ENCODE measurements at regions of chr1 and their contacts with region 1.

Region 1: GRCh38 chr1:31705080-31705866 is 1.5 kb upstream of the COL16A1 start:
- DNase-seq: no peak
- H3K4me3 ChIP-seq: peak overlapping the region in 1 of 2 donors; percentile 51
- H3K27ac ChIP-seq: peak overlapping the region; percentile 87
- H3K4me1 ChIP-seq: peaks cover 63% of the 10 kb centered on the region
- H3K27me3 ChIP-seq: no peaks in the 10 kb centered on the region
- CTCF ChIP-seq: peak in 2 of 3 experiments; percentile 19 to 22
- POLR2A ChIP-seq: no peak

Region 2: DNA sequence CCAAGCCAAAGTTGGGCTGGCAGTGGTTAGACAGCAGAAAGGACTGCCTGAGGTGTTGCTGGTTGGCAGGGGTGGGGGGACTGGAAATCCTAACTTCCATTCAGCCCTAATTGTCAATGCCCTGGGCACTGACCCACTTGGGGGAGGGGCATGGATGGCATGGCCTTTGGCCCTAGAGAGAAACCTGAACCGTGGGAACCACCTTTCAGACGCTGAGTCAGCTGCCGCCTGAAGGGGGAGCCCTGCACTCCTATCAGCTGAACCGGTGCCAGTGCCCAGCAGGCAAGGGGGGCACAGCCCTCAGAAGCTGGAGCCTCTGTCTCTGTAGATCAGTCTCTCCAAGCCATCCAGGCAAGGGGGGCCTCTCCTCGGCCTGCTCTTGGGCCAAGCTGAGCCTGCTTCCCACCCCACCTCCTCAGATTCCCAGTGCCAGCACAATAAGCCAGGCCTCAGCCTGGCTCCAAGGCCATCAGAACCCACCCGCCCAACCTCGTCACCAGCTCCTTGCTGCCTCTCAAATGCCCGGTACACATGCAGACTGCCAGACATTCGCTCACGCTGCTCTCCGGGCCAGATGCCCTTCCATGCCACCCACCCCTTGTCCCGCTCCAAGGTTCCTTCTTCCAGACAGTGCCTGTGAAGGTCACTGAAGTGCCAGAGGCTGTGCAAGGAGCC is 117.4 kb before region 1 on chr1:
- intact Hi-C with region 1: loop called (anchors 10 kb)
- DNase-seq: peak in 1 of 2 donors; percentile 81
- H3K4me3 ChIP-seq: peak overlapping the region in 1 of 2 donors; percentile 58
- H3K27ac ChIP-seq: peak overlapping the region; percentile 70
- H3K4me1 ChIP-seq: peaks cover 50% of the 10 kb centered on the region
- H3K27me3 ChIP-seq: no peaks in the 10 kb centered on the region
- CTCF ChIP-seq: peak in 2 of 3 experiments; percentile 17 to 34
- POLR2A ChIP-seq: no peak

Region 3: DNA sequence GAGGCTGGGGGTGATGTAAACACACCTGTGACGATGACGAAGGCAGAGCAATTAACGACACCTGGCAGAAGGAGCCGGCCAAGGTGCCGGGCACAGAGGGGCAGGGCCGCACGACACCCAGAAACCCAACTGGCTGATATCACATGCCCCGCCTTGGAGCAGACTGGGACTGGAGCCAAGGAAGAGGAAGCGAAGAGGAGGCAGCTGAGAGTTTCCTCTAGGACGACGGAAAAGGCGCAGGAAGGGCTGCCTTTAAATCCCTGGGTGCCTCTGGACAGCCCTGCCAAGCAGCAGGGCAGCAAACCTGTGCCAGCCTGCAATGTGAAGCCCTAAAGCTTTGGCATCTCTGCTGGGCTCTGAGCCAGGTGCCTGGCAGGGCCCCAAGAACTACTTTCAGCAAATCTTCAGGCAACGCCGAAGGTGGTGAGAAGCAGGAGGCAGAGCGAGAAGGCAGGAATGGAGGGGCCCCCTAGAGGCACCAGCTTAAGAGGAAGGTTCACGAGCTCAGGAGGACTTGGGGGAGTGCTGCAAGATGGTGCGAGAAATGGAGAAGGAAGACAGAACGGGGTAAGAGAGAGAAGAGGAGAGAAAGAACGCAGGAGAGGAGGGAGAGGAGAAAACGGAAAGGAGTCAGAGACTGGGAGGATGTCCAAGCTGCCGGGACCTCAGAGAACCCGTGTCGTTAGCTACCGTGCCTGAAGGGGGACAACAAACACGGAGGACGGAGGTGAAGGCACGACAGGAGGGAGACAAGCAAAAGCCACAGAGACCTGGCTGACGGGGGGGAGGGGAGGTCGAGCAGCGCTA is 35.3 kb before region 1 on chr1:
- intact Hi-C with region 1: loop called (anchors 5 kb)
- DNase-seq: no peak
- H3K4me3 ChIP-seq: peak overlapping the region; percentile 12 to 23
- H3K27ac ChIP-seq: peak overlapping the region; percentile 72
- H3K4me1 ChIP-seq: peaks cover 90% of the 10 kb centered on the region
- H3K27me3 ChIP-seq: no peaks in the 10 kb centered on the region
- CTCF ChIP-seq: no peak
- POLR2A ChIP-seq: no peak

Region 4: GRCh38 chr1:31715087-31715872 is 10.0 kb after region 1 on chr1:
- intact Hi-C with region 1: loop called (anchors 1 kb)
- DNase-seq: peak in 1 of 2 donors; percentile 96
- H3K4me3 ChIP-seq: peak overlapping the region; percentile 39 to 58
- H3K27ac ChIP-seq: peak overlapping the region; percentile 90
- H3K4me1 ChIP-seq: peaks cover 46% of the 10 kb centered on the region
- H3K27me3 ChIP-seq: no peaks in the 10 kb centered on the region
- CTCF ChIP-seq: peak; percentile 36 to 81 (median 80)
- POLR2A ChIP-seq: peak in 1 of 2 donors; percentile 64

Measured in vagina (tissue), 2 donors.